GM10248 (cell line): ENCODE measurements at regions of chr4 and their contacts with region 1.

Region 1: DNA sequence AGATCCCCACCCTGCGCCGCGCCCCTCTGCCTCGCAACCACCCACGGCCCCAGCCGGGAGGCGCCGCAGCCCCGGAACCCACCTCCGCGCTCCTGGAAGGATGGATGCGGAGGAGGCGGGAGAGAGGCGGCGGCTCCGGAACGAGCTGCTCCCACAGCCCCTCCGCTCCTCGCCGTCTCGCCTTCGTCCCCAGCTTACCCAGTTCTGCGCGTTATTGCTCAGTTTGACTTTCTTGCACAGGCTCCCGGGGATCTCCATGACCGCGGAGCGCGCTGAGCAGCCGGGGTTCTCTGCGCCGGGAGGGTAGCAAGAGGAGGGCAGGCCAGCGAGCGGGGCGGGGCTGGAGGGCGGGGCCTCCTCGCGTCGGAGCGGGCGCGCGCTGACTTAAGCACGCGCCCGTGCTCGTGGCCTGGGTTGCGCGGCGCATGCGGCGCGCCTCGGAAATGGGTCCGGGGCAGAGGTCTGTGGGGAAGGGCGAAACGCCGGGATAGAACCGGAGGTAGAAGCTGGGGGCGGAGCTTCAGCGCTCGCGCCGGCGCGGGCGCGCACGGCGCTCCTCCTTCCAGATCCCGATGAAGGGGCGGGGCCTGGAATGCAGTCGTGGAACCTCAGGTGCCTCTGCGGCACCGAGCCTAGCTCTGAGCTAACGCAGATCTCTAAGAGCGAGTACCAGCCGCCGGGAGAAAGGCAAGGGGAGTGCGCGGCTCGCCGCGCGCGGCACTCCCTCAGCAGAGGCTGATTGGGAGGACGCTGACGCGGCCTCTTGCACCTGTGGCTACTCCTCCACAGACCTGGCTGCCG is at the start of gene PAPSS1:
- DNase-seq: peak; percentile 93
- CTCF ChIP-seq: no peak

Region 2: DNA sequence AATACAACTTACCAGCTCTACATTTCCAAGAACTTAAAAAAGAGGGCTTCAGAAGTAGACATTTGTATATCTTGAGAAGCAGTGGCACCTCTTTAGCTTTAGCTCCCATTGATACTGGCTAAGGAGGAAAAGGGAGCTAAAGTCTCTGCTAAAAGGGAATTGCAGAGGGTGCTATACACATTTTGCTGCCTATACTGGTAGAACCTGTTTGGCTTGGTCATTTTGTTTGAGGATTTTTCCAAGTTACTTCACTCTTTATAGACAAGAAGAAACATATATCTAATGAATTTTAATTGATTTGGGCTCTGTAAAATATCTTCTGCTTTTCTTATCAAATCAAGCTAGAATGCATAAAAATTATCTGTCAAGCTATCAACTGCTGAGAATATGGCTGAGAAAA is 11.9 kb before region 1 on chr4:
- CTCF ChIA-PET with region 1: interaction called, 10 read pairs
- POLR2A ChIA-PET with region 1: interaction called, 4 read pairs
- DNase-seq: no peak
- CTCF ChIP-seq: no peak